PC-9 (cell line): ENCODE measurements at regions of chr20 and their contacts with region 1.

Region 1: DNA sequence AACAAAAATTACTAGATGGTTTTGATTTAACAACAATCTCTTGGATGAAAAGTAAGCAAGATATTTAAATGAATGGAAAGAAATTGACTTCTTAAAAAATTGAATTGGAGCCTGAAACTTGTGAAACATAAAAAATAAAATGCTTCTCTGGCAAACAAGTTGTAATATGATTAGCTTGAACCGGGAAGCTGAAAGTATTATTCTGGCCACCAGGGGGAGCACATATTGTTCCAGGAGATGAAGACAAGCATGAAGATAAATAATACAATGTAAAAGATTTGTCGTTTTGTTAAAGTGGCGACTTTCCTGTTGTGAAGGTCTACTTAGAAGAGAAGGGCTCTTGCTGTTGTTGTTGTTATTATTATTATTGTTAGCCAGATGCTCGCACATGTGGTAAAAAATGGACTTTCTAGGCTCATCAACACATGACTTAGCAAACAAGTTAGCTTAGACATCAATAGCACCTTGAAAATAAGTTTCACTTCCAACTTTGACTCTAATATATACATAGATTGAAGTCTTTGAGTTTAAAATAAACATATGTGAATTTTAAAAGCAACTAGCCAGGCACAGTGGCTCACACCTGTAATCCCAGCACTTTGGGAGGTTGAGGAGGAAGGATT is 14.2 kb downstream of the PAX1 start:
- DNase-seq: peak; percentile 40 to 45
- H3K4me3 ChIP-seq: no peak overlapping the region
- H3K27ac ChIP-seq: no peak overlapping the region
- H3K4me1 ChIP-seq: no peaks in the 10 kb centered on the region
- H3K27me3 ChIP-seq: peaks cover 32% of the 10 kb centered on the region
- CTCF ChIP-seq: peak; percentile 90

Region 2: DNA sequence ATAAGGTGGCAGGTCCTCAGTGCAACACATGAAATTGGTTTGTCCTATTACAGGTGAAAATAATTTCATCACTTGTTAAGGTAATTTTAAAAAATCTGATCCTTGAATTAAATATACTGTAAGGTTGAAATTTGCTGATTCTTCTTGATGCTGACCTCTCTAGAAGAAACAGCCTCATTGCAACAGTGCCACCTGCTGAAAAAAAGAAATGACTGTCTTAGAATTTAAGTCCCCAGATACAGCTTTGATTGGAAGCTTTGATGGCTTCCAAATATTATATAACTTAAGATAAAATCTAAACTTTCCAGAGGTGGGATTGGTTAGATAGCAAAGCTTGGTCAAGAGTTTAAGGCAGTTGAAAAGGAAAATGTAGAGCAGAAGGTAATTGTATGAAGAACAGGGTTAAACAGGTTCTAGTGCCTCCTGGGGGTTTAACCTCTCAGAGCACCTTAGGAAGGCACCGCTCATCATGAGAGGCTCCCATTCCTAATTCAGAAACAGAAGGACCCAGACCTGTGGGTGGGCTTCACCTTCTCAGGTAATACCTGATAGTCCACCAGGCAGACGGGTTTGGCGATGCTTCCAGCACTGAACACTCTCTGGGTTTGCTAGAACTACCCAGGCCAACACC is 386.7 kb after region 1 on chr20:
- CTCF ChIA-PET with region 1: no interaction called
- POLR2A ChIA-PET with region 1: no interaction called
- intact Hi-C with region 1: loop called (anchors 5 kb)
- DNase-seq: no peak
- H3K4me3 ChIP-seq: no peak overlapping the region
- H3K27ac ChIP-seq: no peak overlapping the region
- H3K4me1 ChIP-seq: no peaks in the 10 kb centered on the region
- H3K27me3 ChIP-seq: no peaks in the 10 kb centered on the region
- CTCF ChIP-seq: peak; percentile 63

Region 3: DNA sequence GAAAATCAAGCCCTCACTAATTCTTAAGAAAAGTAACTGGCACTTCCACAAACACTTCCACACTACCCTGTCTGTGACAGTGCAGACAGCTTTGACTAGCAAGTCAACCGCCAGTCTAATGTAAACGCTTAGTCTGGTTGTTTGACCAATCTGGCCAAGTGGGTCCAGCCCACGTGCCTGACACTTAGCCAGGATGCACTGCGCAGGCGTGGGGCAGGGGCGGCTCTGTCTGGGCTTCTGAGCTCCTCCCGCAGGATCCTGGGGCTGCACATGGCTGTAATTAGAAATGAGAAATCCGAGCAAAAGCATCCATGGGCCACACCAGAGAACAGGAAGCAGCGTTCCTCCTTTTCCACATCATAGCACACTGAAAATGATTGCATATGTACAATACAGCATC is 440.6 kb after region 1 on chr20:
- CTCF ChIA-PET with region 1: interaction called, 14 read pairs
- POLR2A ChIA-PET with region 1: no interaction called
- intact Hi-C with region 1: no loop called
- DNase-seq: no peak
- H3K4me3 ChIP-seq: no peak overlapping the region
- H3K27ac ChIP-seq: no peak overlapping the region
- H3K4me1 ChIP-seq: no peaks in the 10 kb centered on the region
- H3K27me3 ChIP-seq: peaks cover 66% of the 10 kb centered on the region
- CTCF ChIP-seq: no peak

Region 4: GRCh38 chr20:22312744-22313346 is 593.1 kb after region 1 on chr20:
- CTCF ChIA-PET with region 1: interaction called, 12 read pairs
- POLR2A ChIA-PET with region 1: no interaction called
- intact Hi-C with region 1: loop called (anchors 2 kb)
- DNase-seq: peak in 1 of 2 experiments; percentile 25
- H3K4me3 ChIP-seq: no peak overlapping the region
- H3K27ac ChIP-seq: no peak overlapping the region
- H3K4me1 ChIP-seq: no peaks in the 10 kb centered on the region
- H3K27me3 ChIP-seq: peaks cover 57% of the 10 kb centered on the region
- CTCF ChIP-seq: peak; percentile 74

Region 5: GRCh38 chr20:22684072-22684762 is 964.5 kb after region 1 on chr20:
- CTCF ChIA-PET with region 1: no interaction called
- POLR2A ChIA-PET with region 1: no interaction called
- intact Hi-C with region 1: loop called (anchors 2 kb)
- DNase-seq: peak; percentile 56 to 68
- H3K4me3 ChIP-seq: no peak overlapping the region
- H3K27ac ChIP-seq: no peak overlapping the region
- H3K4me1 ChIP-seq: no peaks in the 10 kb centered on the region
- H3K27me3 ChIP-seq: no peaks in the 10 kb centered on the region
- CTCF ChIP-seq: peak; percentile 92